ENCODE measurements at regions of chr5 and their contacts with region 1.

Region 1: GRCh38 chr5:79295029-79295428 is 59.1 kb downstream of the JMY start:
- DNase-seq: no peak
- ATAC-seq: no peak
- H3K4me3 ChIP-seq: no peak overlapping the region
- H3K27ac ChIP-seq: no peak overlapping the region
- H3K4me1 ChIP-seq: no peaks in the 10 kb centered on the region
- H3K27me3 ChIP-seq: no peaks in the 10 kb centered on the region
- CTCF ChIP-seq: no peak
- EP300 ChIP-seq: no peak
- POLR2A ChIP-seq: no peak
- RAD21 ChIP-seq: no peak

Region 2: GRCh38 chr5:79263290-79263689 is 31.7 kb before region 1 on chr5:
- CTCF ChIA-PET with region 1: no interaction called
- POLR2A ChIA-PET with region 1: no interaction called
- in situ Hi-C with region 1: no loop called
- intact Hi-C with region 1: no loop called
- DNase-seq: no peak
- ATAC-seq: no peak
- H3K4me3 ChIP-seq: no peak overlapping the region
- H3K27ac ChIP-seq: no peak overlapping the region
- H3K4me1 ChIP-seq: peaks cover 0 to 10% of the 10 kb centered on the region in 2 experiments; a peak in 1 of 5 replicates
- H3K27me3 ChIP-seq: no peaks in the 10 kb centered on the region
- CTCF ChIP-seq: no peak
- EP300 ChIP-seq: no peak
- POLR2A ChIP-seq: no peak
- RAD21 ChIP-seq: no peak

Region 3: DNA sequence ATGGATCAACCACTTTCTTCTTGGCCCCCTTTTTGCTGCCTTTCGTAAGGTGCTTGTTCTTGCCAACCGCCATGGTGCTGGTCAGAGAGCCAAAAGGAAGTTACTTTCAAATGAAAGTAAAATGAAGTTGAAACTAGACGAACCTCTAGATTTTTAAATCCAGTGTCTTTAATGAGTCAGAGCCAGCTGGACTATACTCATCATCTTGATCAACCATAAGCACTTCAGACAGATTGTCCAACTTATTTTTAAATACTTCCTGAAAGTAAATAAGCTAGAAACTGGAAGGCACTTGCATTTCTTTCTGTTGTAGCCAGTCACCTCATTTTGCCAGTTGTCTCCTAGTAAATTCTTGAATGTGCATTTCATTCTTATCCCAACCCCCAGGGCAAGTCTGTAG is 10.2 kb before region 1 on chr5:
- CTCF ChIA-PET with region 1: no interaction called
- POLR2A ChIA-PET with region 1: interaction called, 10 read pairs
- in situ Hi-C with region 1: no loop called
- intact Hi-C with region 1: no loop called
- DNase-seq: no peak
- ATAC-seq: no peak
- H3K4me3 ChIP-seq: no peak overlapping the region
- H3K27ac ChIP-seq: no peak overlapping the region
- H3K4me1 ChIP-seq: no peaks in the 10 kb centered on the region
- H3K27me3 ChIP-seq: no peaks in the 10 kb centered on the region
- CTCF ChIP-seq: no peak
- EP300 ChIP-seq: no peak
- POLR2A ChIP-seq: no peak
- RAD21 ChIP-seq: no peak

Region 4: DNA sequence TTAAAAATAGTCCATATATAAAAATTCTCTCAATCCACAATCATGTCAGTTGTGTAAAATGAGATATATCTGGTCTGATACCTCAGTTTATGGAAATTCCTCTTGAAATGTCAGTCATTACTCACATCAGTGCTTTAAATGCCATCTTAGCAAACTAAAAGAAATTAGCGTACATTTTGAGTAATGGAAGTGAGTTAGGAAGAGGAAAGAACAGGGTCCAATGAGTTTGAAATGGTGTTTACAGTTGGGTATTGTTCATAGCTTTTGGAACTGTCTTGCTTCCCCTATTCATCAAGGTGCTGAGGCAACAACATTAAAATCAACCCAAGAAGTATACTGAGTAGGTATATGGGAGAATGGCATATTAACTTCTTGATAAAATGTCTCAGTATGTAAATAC is 704.7 kb after region 1 on chr5:
- CTCF ChIA-PET with region 1: no interaction called
- POLR2A ChIA-PET with region 1: no interaction called
- in situ Hi-C with region 1: no loop called
- intact Hi-C with region 1: no loop called
- DNase-seq: no peak
- ATAC-seq: no peak
- H3K4me3 ChIP-seq: no peak overlapping the region
- H3K27ac ChIP-seq: no peak overlapping the region
- H3K4me1 ChIP-seq: no peaks in the 10 kb centered on the region
- H3K27me3 ChIP-seq: peaks cover 4 to 12% of the 10 kb centered on the region in 2 experiments; a peak in 4 of 5 replicates
- CTCF ChIP-seq: no peak
- EP300 ChIP-seq: no peak
- POLR2A ChIP-seq: no peak
- RAD21 ChIP-seq: no peak